Activated B cell treated with CpG ODN at 0.5 μM for 24 hours (primary cell): ENCODE measurements at regions of chr20 and their contacts with region 1.

Region 1: DNA sequence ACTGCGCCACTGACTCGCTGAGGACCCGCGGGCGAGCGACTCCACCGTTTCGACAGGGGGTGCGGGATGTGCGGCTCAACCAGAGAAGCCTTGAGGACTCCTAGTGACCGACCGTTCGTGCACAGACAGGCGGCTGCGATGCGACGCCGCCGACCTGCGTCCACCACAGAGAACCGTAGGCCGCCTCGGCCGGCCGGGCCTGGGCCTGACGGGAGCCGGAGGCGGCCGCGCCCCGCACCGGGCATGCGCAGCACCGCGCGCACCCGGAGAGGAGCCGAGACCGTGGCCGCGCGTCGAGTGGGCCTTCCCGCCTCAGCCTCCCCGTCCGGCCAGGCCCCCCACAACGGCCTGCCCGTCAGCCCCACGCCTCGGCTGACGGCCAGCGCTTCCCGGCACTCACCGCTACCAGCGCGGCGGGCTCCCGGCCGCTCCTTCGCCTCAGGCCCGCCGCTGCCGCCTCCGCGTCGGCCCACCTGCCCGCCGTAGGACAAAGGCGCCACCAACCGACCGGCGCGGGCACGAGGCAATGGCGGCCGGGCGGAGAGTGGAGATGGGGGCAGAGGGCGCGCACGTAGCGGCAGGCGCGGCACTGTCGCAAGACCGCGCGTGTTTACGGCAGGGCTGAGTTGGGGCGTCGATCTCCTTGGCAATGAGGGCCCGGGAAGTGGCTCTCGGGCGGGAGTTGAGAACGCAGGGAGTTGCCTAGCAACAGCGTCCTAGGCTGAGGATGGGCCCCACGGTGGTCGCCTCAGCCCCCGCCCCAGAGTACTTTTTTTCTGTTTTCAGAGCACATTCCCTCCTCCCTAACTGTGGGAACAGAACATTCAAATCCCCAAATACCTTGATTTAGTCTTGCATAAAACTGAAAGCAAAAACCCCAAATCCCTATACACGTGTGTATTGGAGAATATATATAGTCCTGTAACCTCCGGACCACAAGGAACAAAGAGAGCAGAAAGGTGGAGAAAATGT is at the start of gene NCOA5:
- DNase-seq: peak; percentile 93
- ATAC-seq: peak; percentile 91
- H3K4me3 Mint-ChIP-seq: peak within 1 kb of the TSS; percentile 90
- H3K27ac Mint-ChIP-seq: peak within 1 kb of the TSS; percentile 89
- H3K4me1 Mint-ChIP-seq: peaks cover 53% of the 10 kb centered on the region
- H3K27me3 Mint-ChIP-seq: no peaks in the 10 kb centered on the region
- CTCF ChIP-seq: no peak
- total RNA-seq, gene NCOA5: 46.4 and 53.1 TPM in 2 replicates

Region 2: GRCh38 chr20:45792332-45792686 is 297.4 kb before region 1 on chr20:
- CTCF ChIA-PET with region 1: no interaction called
- POLR2A ChIA-PET with region 1: no interaction called
- intact Hi-C with region 1: loop called (anchors 5 kb)
- DNase-seq: no peak
- ATAC-seq: peak; percentile 28
- H3K4me3 Mint-ChIP-seq: peak overlapping the region; percentile 92
- H3K27ac Mint-ChIP-seq: peak overlapping the region; percentile 82
- H3K4me1 Mint-ChIP-seq: peaks cover 16% of the 10 kb centered on the region
- H3K27me3 Mint-ChIP-seq: no peaks in the 10 kb centered on the region
- CTCF ChIP-seq: no peak

Region 3: GRCh38 chr20:45946149-45946970 is 143.3 kb before region 1 on chr20:
- CTCF ChIA-PET with region 1: no interaction called
- POLR2A ChIA-PET with region 1: no interaction called
- intact Hi-C with region 1: no loop called
- DNase-seq: no peak
- ATAC-seq: peak; percentile 19
- H3K4me3 Mint-ChIP-seq: no peak overlapping the region
- H3K27ac Mint-ChIP-seq: no peak overlapping the region
- H3K4me1 Mint-ChIP-seq: peaks cover 4% of the 10 kb centered on the region
- H3K27me3 Mint-ChIP-seq: no peaks in the 10 kb centered on the region
- CTCF ChIP-seq: no peak

Region 4: DNA sequence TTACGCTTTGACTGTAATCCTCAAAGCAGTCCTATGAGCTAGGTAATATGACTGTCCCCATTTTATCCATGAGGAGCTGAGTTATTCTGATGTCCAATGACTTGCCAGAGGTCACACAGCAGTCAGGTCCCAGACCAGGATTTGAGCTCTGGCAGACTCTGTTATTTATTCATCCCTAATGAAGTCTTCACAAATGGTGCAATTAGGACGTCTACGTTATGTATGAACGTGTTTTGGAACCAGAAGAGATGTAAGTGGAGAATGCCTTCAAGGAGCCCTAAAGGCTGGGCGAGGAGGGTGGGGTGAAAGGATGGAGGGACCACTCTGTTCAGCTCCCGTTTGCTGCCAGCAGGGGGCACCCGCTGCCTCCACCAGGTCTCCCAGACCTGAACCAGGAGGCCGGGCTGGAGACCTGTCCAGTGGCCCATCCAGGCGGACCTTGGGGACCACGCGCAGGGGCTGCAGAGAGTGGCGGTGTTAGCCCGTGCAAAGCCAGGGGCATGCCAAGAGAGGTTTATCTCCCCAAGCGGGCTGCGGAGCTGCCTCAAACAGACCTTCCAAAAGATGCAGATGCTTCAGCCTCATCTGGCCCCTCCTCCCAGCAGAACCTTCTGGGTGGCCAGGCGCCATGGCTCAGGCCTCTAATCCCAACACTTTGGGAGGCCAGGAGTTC is 102.5 kb before region 1 on chr20:
- CTCF ChIA-PET with region 1: interaction called, 4 read pairs
- POLR2A ChIA-PET with region 1: no interaction called
- intact Hi-C with region 1: loop called (anchors 1 kb)
- DNase-seq: peak; percentile 70
- ATAC-seq: peak; percentile 97
- H3K4me3 Mint-ChIP-seq: no peak overlapping the region
- H3K27ac Mint-ChIP-seq: no peak overlapping the region
- H3K4me1 Mint-ChIP-seq: peaks cover 5% of the 10 kb centered on the region
- H3K27me3 Mint-ChIP-seq: peaks cover 13% of the 10 kb centered on the region
- CTCF ChIP-seq: no peak

Region 5: DNA sequence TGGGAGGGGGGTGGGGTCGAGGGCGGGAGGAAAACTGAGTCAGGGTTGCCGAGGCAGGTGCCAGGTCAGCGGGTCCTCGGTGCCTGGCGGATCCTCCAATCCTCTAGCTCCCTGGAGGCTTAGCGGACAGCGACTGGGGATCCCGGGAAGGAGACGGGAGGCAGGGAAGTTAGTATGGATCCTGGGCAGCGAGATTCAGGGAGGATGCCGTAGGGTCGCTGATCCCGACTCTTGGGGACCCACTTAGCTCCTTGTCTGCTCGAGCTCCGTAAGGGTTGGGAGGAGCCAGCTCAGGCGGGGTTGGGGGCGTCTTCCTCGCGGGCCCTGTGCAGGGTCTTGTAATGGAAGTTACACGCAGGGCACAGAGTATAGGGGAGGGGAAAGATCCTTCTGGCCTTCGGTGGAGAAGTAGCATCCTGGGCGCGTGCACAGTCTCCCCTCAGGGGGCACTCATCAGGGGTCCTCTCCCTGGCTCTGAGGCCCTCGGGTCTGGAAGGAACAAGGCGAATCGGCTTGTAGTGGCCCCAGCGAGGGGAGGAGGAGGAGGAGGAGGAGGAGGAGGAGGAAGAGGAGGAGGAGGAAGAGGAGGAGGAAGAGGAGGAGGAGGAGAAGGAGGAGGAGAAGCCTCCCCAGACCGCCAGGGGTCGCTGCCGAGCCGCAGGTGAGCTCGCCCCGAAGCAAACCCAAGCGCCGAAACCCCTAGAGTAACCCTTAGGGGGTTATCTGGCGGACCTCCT is 67.1 kb before region 1 on chr20:
- CTCF ChIA-PET with region 1: interaction called, 3 read pairs
- POLR2A ChIA-PET with region 1: no interaction called
- intact Hi-C with region 1: loop called (anchors 1 kb)
- DNase-seq: peak; percentile 73
- ATAC-seq: peak; percentile 62
- H3K4me3 Mint-ChIP-seq: peak overlapping the region; percentile 70
- H3K27ac Mint-ChIP-seq: no peak overlapping the region
- H3K4me1 Mint-ChIP-seq: peaks cover 24% of the 10 kb centered on the region
- H3K27me3 Mint-ChIP-seq: peaks cover 47% of the 10 kb centered on the region
- CTCF ChIP-seq: no peak

Region 6: DNA sequence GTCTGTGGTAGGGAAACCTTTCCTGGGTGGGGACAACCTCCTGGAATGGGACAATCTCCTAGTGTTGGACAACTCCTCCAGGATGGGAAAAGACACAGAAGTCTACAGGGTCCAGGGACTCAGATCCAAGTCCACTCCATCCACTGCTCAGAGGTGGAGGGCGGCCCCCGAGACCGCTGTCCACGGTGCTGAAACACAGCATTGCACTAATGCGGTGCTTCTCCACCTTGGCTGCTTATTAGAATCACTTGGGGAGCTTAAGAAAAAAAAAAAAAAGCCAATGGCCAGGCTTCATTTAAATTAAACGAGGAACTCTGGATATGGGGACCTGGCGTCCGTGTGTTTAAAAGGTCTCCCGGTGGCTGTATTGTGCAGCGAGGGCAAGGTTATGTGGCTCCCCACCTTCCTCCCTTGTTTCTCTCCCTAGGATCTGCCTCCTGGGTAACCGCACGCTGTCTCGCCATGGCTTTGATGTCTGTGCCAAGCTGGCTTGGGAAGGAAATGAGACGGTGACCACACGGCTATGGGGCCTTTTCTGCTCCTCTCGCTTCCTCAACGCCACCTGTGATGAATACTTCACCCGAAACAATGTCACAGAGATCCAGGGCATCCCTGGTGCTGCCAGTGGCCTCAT is 48.7 kb before region 1 on chr20:
- CTCF ChIA-PET with region 1: no interaction called
- POLR2A ChIA-PET with region 1: no interaction called
- intact Hi-C with region 1: no loop called
- DNase-seq: no peak
- ATAC-seq: peak; percentile 47
- H3K4me3 Mint-ChIP-seq: no peak overlapping the region
- H3K27ac Mint-ChIP-seq: no peak overlapping the region
- H3K4me1 Mint-ChIP-seq: no peaks in the 10 kb centered on the region
- H3K27me3 Mint-ChIP-seq: peaks cover 55% of the 10 kb centered on the region
- CTCF ChIP-seq: no peak

Region 7: GRCh38 chr20:46117704-46118467 is 28.2 kb after region 1 on chr20 and contains the start of gene CD40:
- CTCF ChIA-PET with region 1: interaction called, 3 read pairs
- POLR2A ChIA-PET with region 1: interaction called, 8 read pairs
- intact Hi-C with region 1: loop called (anchors 1 kb)
- DNase-seq: peak; percentile 91
- ATAC-seq: peak; percentile 76
- H3K4me3 Mint-ChIP-seq: peak within 1 kb of the TSS; percentile 100
- H3K27ac Mint-ChIP-seq: peak within 1 kb of the TSS; percentile 100
- H3K4me1 Mint-ChIP-seq: peaks cover 60% of the 10 kb centered on the region
- H3K27me3 Mint-ChIP-seq: no peaks in the 10 kb centered on the region
- CTCF ChIP-seq: no peak
- total RNA-seq, gene CD40: 410 and 464 TPM in 2 replicates